ENCODE measurements at regions of chr12 and their contacts with region 1.

Region 1: GRCh38 chr12:89352492-89353187 is at the start of gene DUSP6:
- DNase-seq: peak; percentile 97
- H3K4me3 ChIP-seq: peak within 1 kb of the TSS; percentile 44 to 70
- H3K27ac ChIP-seq: peak within 1 kb of the TSS; percentile 90 to 95
- H3K4me1 ChIP-seq: peaks cover 8% of the 10 kb centered on the region
- H3K27me3 ChIP-seq: no peaks in the 10 kb centered on the region
- CTCF ChIP-seq: peak in 1 of 4 experiments; percentile 12
- POLR2A ChIP-seq: peak; percentile 91
- total RNA-seq, gene DUSP6: 30.6 to 36.2 TPM

Region 2: GRCh38 chr12:89390802-89391673 is 38.4 kb after region 1 on chr12:
- intact Hi-C with region 1: no loop called
- DNase-seq: no peak
- H3K4me3 ChIP-seq: no peak overlapping the region
- H3K27ac ChIP-seq: no peak overlapping the region
- H3K4me1 ChIP-seq: no peaks in the 10 kb centered on the region
- H3K27me3 ChIP-seq: no peaks in the 10 kb centered on the region
- CTCF ChIP-seq: no peak
- POLR2A ChIP-seq: no peak

Region 3: GRCh38 chr12:89417246-89417977 is 64.8 kb after region 1 on chr12:
- intact Hi-C with region 1: loop called (anchors 5 kb)
- DNase-seq: peak; percentile 29
- H3K4me3 ChIP-seq: no peak overlapping the region
- H3K27ac ChIP-seq: no peak overlapping the region
- H3K4me1 ChIP-seq: peaks cover 2% of the 10 kb centered on the region
- H3K27me3 ChIP-seq: no peaks in the 10 kb centered on the region
- CTCF ChIP-seq: no peak
- POLR2A ChIP-seq: no peak

Region 4: GRCh38 chr12:89451841-89452251 is 99.2 kb after region 1 on chr12:
- intact Hi-C with region 1: loop called (anchors 2 kb)
- DNase-seq: no peak
- H3K4me3 ChIP-seq: no peak overlapping the region
- H3K27ac ChIP-seq: no peak overlapping the region
- H3K4me1 ChIP-seq: no peaks in the 10 kb centered on the region
- H3K27me3 ChIP-seq: no peaks in the 10 kb centered on the region
- CTCF ChIP-seq: no peak
- POLR2A ChIP-seq: no peak